Caco-2 (cell line): ENCODE measurements at regions of chr6 and their contacts with region 1.

Region 1: GRCh38 chr6:131844243-131844841 is 36.5 kb downstream of the ENPP1 start:
- DNase-seq: peak in 1 of 2 experiments; percentile 50
- H3K4me3 ChIP-seq: no peak overlapping the region
- H3K4me3 Mint-ChIP-seq: peak overlapping the region; percentile 12
- H3K27ac Mint-ChIP-seq: peak overlapping the region; percentile 17
- H3K4me1 ChIP-seq: no peaks in the 10 kb centered on the region; the same call in 1 of the 2 replicates
- H3K4me1 Mint-ChIP-seq: peaks cover 21% of the 10 kb centered on the region
- H3K27me3 ChIP-seq: no peaks in the 10 kb centered on the region; the same call in 1 of the 2 replicates
- H3K27me3 Mint-ChIP-seq: no peaks in the 10 kb centered on the region
- CTCF ChIP-seq: no peak

Region 2: DNA sequence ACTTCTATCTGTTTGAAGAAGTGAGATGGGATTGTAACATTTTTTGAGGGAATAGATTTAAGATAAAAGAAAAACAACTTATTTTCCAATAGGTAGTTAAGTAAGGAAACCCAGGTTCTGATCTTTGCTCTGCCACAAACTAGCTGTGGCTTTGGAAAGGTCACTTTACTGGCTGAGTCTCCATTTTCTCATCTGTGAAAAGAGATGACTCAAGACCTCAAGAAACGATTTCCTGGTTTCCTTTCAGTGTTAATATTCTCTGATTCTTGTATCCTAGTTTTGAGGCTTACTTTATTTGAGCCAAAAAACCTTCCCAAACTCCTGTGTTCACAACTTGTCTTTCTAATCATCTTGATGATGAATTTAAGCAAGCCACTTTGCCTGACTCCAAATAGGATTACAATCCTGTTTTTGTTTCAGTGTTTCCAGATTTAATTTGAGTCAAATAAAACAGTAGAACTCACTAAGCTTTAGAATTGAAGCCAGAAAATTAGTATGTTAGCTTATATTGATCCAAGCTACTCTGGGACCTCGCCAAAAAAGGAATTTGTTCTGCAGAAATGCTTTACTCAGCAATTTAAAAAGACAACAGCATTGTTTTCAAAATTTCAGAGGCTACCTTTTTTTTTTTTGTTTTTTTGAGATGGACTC is 14.5 kb after region 1 on chr6:
- CTCF ChIA-PET with region 1: no interaction called
- POLR2A ChIA-PET with region 1: no interaction called
- intact Hi-C with region 1: loop called (anchors 1 kb)
- DNase-seq: no peak
- H3K4me3 ChIP-seq: no peak overlapping the region
- H3K4me3 Mint-ChIP-seq: no peak overlapping the region
- H3K27ac Mint-ChIP-seq: no peak overlapping the region
- H3K4me1 ChIP-seq: peaks cover 16% of the 10 kb centered on the region
- H3K4me1 Mint-ChIP-seq: peaks cover 15% of the 10 kb centered on the region
- H3K27me3 ChIP-seq: no peaks in the 10 kb centered on the region
- H3K27me3 Mint-ChIP-seq: no peaks in the 10 kb centered on the region
- CTCF ChIP-seq: no peak

Region 3: DNA sequence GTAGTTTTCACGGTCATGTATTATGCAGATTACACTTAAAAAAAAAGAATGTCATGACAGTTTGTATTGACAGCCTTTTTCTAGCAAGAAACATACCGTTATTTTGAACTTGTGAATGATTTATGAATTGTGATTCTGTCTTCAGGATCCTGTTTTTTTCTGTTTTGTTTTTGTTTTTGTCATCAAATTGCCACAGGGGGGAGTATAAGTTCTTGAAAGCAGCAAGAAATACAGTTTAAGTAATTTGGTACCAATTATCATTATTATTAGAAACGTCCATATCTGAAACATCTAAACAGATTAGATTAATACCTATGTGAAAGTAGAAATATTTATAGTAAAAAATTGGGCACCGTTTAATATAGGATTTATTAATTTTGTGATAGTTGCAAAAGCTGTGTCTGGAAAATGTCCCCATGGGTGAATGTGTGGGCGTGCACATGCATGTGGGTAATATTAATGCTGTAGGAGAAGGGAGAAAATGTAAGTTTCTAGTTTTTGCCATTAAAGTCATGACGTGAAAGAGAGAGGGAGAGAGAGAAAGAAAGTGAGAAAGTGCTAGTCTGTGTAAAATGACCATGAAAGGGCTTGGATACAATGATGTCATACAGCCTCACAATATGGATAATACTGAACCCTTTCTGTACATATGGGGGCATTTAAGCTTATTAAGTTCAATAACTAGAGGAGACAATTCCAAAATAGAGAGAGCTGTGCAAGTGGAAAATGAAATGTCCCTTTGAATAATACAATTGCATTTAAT is 116.2 kb after region 1 on chr6:
- CTCF ChIA-PET with region 1: no interaction called
- POLR2A ChIA-PET with region 1: no interaction called
- intact Hi-C with region 1: no loop called
- DNase-seq: no peak
- H3K4me3 ChIP-seq: no peak overlapping the region
- H3K4me3 Mint-ChIP-seq: no peak overlapping the region
- H3K27ac Mint-ChIP-seq: no peak overlapping the region
- H3K4me1 ChIP-seq: peaks cover 21% of the 10 kb centered on the region
- H3K4me1 Mint-ChIP-seq: no peaks in the 10 kb centered on the region
- H3K27me3 ChIP-seq: no peaks in the 10 kb centered on the region
- H3K27me3 Mint-ChIP-seq: no peaks in the 10 kb centered on the region
- CTCF ChIP-seq: no peak